Colonic mucosa (tissue), 4 donors: ENCODE measurements at regions of chr1 and their contacts with region 1.

Region 1: DNA sequence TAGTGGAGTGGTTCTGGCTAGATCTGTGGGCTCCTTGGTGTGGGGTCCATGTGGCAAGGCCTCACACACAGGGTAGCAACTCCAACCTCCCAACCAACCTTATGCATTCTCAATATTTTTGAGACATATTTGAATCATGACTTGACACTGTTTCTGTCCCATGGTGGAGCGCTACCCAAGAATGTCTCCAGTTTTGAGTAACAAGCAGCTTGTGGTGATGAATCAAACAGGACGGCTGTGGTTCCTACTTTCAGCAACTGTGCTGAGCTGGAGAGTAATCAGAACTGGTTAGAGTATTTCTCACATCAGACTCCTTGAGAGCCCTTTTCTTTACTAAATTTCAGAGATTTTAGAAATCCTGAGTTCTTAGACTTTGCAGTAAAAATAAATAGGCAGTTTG is 3.1 kb downstream of the LCE3D start:
- DNase-seq: no peak
- H3K4me3 ChIP-seq: no peak overlapping the region
- H3K27ac ChIP-seq: no peak overlapping the region
- H3K4me1 ChIP-seq: no peaks in the 10 kb centered on the region
- H3K27me3 ChIP-seq: no peaks in the 10 kb centered on the region
- CTCF ChIP-seq: no peak

Region 2: GRCh38 chr1:152630632-152631031 is 53.5 kb after region 1 on chr1:
- intact Hi-C with region 1: loop called (anchors 10 kb)
- DNase-seq: no peak
- H3K4me3 ChIP-seq: no peak overlapping the region
- H3K27ac ChIP-seq: no peak overlapping the region
- H3K4me1 ChIP-seq: no peaks in the 10 kb centered on the region
- H3K27me3 ChIP-seq: no peaks in the 10 kb centered on the region
- CTCF ChIP-seq: no peak

Region 3: GRCh38 chr1:153099646-153100045 is 522.5 kb after region 1 on chr1:
- intact Hi-C with region 1: no loop called
- DNase-seq: no peak
- H3K4me3 ChIP-seq: no peak overlapping the region
- H3K27ac ChIP-seq: no peak overlapping the region
- H3K4me1 ChIP-seq: no peaks in the 10 kb centered on the region
- H3K27me3 ChIP-seq: no peaks in the 10 kb centered on the region
- CTCF ChIP-seq: no peak